ENCODE measurements at regions of chr11 and their contacts with region 1.

Region 1: GRCh38 chr11:26283852-26284408 is 48.0 kb upstream of the ANO3 start:
- DNase-seq: no peak
- CTCF ChIP-seq: no peak

Region 2: GRCh38 chr11:26199331-26200095 is 84.4 kb before region 1 on chr11:
- CTCF ChIA-PET with region 1: no interaction called
- POLR2A ChIA-PET with region 1: no interaction called
- DNase-seq: no peak
- CTCF ChIP-seq: no peak

Region 3: GRCh38 chr11:26268980-26269660 is 14.8 kb before region 1 on chr11:
- CTCF ChIA-PET with region 1: interaction called, 15 read pairs
- POLR2A ChIA-PET with region 1: no interaction called
- DNase-seq: no peak
- CTCF ChIP-seq: no peak

Region 4: DNA sequence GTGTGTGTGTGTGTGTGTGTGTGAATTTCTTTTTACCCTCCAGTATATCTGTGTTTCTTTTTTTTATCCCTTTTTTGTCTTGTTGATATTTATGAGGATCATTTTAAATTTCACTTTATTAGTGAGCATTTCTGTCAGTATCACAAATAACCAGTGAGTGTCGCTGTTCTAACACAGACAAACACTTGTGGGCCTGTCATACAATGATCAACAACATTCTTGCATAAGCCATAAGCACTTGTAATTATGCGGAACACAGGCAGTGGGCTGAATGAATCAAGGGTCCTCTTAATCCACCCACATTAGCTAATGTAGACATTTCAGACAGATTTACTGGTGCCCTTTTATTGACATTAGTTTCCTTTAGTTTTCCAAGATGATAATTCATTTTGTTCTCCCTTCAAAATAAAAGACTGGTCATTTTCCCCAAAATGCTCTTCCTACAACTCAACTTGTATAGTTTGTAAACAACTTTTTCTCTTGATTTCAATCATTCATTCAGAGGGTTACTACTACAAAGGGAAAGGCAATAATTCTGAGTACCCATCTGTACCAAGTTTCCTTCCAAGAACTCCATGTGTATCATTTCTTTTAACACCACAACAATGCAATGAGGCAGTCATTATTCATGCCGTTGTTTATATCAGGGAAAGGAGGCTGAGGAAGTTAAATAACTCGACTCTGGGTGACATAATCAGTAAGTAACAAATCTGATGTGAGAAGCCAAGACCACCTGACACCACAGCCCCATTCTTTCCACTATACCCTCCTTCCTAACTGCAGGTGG is 13.5 kb after region 1 on chr11:
- CTCF ChIA-PET with region 1: interaction called, 23 read pairs
- POLR2A ChIA-PET with region 1: no interaction called
- DNase-seq: peak; percentile 28
- CTCF ChIP-seq: peak; percentile 79

Region 5: GRCh38 chr11:26556581-26556980 is 272.7 kb after region 1 on chr11:
- CTCF ChIA-PET with region 1: no interaction called
- POLR2A ChIA-PET with region 1: no interaction called
- DNase-seq: no peak
- CTCF ChIP-seq: no peak

Measured in GM10248 (cell line).